CD14-positive monocyte (primary cell): ENCODE measurements at regions of chr1 and their contacts with region 1.

Region 1: DNA sequence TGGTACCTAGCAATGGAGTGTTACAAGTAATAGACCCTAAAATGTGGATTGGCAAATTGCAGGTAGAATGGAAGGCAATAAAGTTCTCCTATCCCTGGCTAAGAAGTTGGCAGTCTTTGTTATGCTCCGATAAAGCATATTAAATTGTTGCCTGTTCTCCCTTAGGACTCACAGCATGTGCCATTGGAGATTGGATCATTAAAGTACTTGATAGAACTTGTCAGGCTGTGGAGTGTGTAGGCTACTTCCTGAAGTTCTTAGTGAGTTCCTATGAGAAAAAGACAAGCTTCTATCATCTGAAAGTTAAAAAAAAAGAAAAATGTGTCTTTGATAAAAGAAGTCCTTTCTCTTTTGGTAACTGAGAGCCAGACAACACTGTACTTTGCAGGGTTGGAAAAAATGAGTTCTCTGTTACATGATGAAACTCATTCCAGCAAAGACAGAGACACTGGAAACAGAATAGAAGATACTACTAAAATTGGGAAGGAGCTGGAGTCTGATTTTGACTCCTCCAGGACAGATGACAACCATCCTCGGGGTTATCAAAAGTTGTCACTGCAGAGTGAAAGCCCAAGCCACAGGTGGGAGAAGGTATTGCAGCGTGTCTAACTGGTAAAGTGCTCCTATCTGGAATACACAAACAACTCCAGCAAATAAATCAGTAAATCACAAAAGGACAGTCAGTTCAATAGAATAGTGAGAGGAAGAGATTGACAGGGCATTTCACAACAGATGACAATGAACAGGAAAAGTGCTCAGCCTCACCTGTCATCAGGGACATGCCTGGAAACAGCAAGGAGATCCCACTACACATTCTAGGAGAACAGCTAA is 87.5 kb upstream of the WDR26 start:
- DNase-seq: no peak
- H3K4me3 ChIP-seq: no peak overlapping the region
- H3K4me3 Mint-ChIP-seq: no peak overlapping the region
- H3K27ac ChIP-seq: no peak overlapping the region
- H3K27ac Mint-ChIP-seq: no peak overlapping the region
- H3K4me1 ChIP-seq: no peaks in the 10 kb centered on the region
- H3K4me1 Mint-ChIP-seq: peaks cover 2% of the 10 kb centered on the region
- H3K27me3 ChIP-seq: no peaks in the 10 kb centered on the region
- H3K27me3 Mint-ChIP-seq: peaks cover 0 to 3% (median 2%) of the 10 kb centered on the region in 3 donors
- CTCF ChIP-seq: no peak

Region 2: GRCh38 chr1:224113918-224114786 is 408.0 kb before region 1 on chr1 and contains the start of gene FBXO28:
- intact Hi-C with region 1: no loop called
- DNase-seq: peak; percentile 92 to 94 (median 94)
- H3K4me3 ChIP-seq: peak within 1 kb of the TSS; percentile 75 to 87 (median 76)
- H3K4me3 Mint-ChIP-seq: peak within 1 kb of the TSS; percentile 86 to 94
- H3K27ac ChIP-seq: peak within 1 kb of the TSS; percentile 91 to 96
- H3K27ac Mint-ChIP-seq: peak within 1 kb of the TSS; percentile 89 to 95 (median 93)
- H3K4me1 ChIP-seq: peaks cover 22 to 34% of the 10 kb centered on the region in 2 donors
- H3K4me1 Mint-ChIP-seq: peaks cover 24% of the 10 kb centered on the region
- H3K27me3 ChIP-seq: peaks cover 0 to 2% of the 10 kb centered on the region in 2 donors
- H3K27me3 Mint-ChIP-seq: peaks cover 0 to 5% (median 0%) of the 10 kb centered on the region in 3 donors
- CTCF ChIP-seq: no peak
- polyA plus RNA-seq, gene FBXO28: 12.9 to 15.8 (median 13.0) TPM

Region 3: DNA sequence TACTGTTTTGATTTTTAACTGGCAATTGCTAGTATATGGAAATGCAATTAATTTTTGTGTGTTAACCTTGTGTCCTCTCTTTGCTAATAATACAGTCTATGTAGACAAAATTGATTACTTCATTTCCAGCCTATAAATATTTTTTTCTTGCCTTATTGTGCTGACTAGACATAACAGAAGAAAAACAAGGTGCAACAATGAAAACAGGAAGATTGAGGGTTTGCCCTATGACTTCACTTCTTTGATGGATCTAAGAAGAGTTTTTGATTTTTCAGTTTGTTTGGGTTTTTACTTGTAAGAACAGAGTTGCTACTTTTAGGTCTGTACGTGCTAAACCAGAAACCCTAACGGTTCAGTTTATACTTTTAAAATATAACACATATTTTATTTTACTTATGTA is 174.0 kb before region 1 on chr1:
- intact Hi-C with region 1: no loop called
- DNase-seq: no peak
- H3K4me3 ChIP-seq: no peak overlapping the region
- H3K4me3 Mint-ChIP-seq: no peak overlapping the region
- H3K27ac ChIP-seq: no peak overlapping the region
- H3K27ac Mint-ChIP-seq: no peak overlapping the region
- H3K4me1 ChIP-seq: no peaks in the 10 kb centered on the region
- H3K4me1 Mint-ChIP-seq: no peaks in the 10 kb centered on the region
- H3K27me3 ChIP-seq: no peaks in the 10 kb centered on the region
- H3K27me3 Mint-ChIP-seq: peaks cover 9 to 11% (median 10%) of the 10 kb centered on the region in 3 donors
- CTCF ChIP-seq: no peak

Region 4: GRCh38 chr1:224644553-224645154 is 122.5 kb after region 1 on chr1:
- intact Hi-C with region 1: loop called (anchors 5 to 10 kb)
- DNase-seq: peak; percentile 15 to 40 (median 18)
- H3K4me3 ChIP-seq: no peak overlapping the region
- H3K4me3 Mint-ChIP-seq: no peak overlapping the region
- H3K27ac ChIP-seq: no peak overlapping the region
- H3K27ac Mint-ChIP-seq: no peak overlapping the region
- H3K4me1 ChIP-seq: no peaks in the 10 kb centered on the region
- H3K4me1 Mint-ChIP-seq: peaks cover 5% of the 10 kb centered on the region
- H3K27me3 ChIP-seq: no peaks in the 10 kb centered on the region
- H3K27me3 Mint-ChIP-seq: peaks cover 7 to 10% (median 7%) of the 10 kb centered on the region in 3 donors
- CTCF ChIP-seq: peak; percentile 84

Region 5: DNA sequence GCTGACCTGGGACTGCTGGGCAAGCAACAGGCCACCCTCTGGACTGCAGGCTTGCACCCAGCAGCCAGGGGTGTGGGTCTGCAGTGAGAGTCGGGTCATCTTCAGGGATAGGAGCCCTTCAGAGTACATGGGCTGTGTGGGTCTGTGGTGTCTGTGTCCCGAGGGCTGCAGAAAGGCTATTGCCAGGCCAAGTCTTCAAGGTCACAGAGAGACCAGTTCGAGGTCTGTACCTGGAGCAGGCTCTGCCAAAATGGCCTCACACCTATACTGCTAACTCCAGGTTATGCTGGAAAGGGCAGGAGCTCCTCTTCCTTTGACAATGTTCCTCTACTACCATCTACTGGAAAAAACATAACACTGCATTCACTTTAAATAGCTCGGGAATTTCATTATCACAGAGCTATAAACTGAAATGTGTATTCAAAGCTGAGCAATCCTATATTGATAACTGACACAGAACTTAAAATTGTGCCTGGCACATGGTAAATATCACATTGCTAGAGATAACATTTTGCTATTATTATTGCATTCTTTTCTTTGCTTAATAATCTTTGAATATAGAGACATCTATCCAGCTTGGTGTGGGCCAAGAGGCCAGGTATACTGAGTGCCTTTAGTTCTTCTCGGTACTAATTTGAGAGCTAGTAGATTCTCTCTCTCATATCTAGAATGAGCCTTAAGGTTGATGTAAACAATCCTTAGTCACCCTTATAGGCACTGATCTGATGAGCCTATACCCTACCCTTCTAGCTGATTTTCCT is 400.5 kb after region 1 on chr1:
- intact Hi-C with region 1: loop called in 1 of 2 experiments (anchors 5 kb)
- DNase-seq: peak in 1 of 3 donors; percentile 4
- H3K4me3 ChIP-seq: no peak overlapping the region
- H3K4me3 Mint-ChIP-seq: no peak overlapping the region
- H3K27ac ChIP-seq: no peak overlapping the region
- H3K27ac Mint-ChIP-seq: no peak overlapping the region
- H3K4me1 ChIP-seq: no peaks in the 10 kb centered on the region
- H3K4me1 Mint-ChIP-seq: no peaks in the 10 kb centered on the region
- H3K27me3 ChIP-seq: no peaks in the 10 kb centered on the region
- H3K27me3 Mint-ChIP-seq: no peaks in the 10 kb centered on the region
- CTCF ChIP-seq: peak; percentile 42